ENCODE measurements at regions of chr3 and their contacts with region 1.

Region 1: GRCh38 chr3:169764452-169765274 is at the start of gene TERC:
- DNase-seq: peak; percentile 85
- H3K4me3 Mint-ChIP-seq: peak within 1 kb of the TSS; percentile 96
- H3K27ac Mint-ChIP-seq: peak within 1 kb of the TSS; percentile 98
- H3K4me1 Mint-ChIP-seq: peaks cover 24% of the 10 kb centered on the region
- H3K27me3 Mint-ChIP-seq: peaks cover 5% of the 10 kb centered on the region
- total RNA-seq, gene TERC: 3.1 and 3.4 TPM in 2 replicates

Region 2: GRCh38 chr3:169812332-169813235 is 47.9 kb after region 1 on chr3 and contains the starts of genes LRRC34 and LRRIQ4:
- intact Hi-C with region 1: loop called (anchors 2 kb)
- DNase-seq: peak; percentile 64
- H3K4me3 Mint-ChIP-seq: peak within 1 kb of the TSS; percentile 83
- H3K27ac Mint-ChIP-seq: peak within 1 kb of the TSS; percentile 89
- H3K4me1 Mint-ChIP-seq: peaks cover 49% of the 10 kb centered on the region
- H3K27me3 Mint-ChIP-seq: peaks cover 6% of the 10 kb centered on the region
- total RNA-seq, gene LRRC34: 2.8 and 2.9 TPM in 2 replicates
- total RNA-seq, gene LRRIQ4: 0.10 and 0.12 TPM in 2 replicates

Region 3: DNA sequence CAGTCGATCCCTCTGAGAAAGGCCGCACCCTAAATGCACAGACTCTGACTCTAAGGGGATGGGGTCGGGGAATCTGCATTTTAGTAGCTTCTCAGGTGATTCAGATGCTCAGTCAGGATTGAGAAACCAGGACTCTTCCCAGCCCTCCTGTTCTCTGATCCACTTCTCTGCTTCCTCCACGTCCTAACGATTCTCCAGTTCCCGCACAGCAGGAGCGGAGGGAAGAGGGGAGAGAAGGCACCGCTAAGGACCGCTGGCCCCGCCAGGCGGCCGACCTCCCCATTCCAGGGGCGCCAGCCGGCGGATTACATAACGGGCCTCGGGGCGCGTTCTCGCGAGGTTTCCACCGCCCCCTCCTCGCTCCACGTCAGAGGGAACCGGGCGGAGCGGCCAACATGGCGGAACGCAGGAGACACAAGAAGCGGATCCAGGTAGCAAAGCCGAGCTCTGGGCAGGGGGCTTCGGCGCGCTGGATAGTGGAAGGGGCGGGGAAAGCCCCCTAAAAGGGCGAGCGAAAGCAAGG is 201.8 kb after region 1 on chr3 and contains the start of gene SEC62:
- intact Hi-C with region 1: loop called (anchors 1 kb)
- DNase-seq: peak; percentile 90
- H3K4me3 Mint-ChIP-seq: peak within 1 kb of the TSS; percentile 91
- H3K27ac Mint-ChIP-seq: peak within 1 kb of the TSS; percentile 99
- H3K4me1 Mint-ChIP-seq: peaks cover 42% of the 10 kb centered on the region
- H3K27me3 Mint-ChIP-seq: peaks cover 2% of the 10 kb centered on the region
- total RNA-seq, gene SEC62: 75.4 and 85.7 TPM in 2 replicates

Region 4: GRCh38 chr3:170055209-170055608 is 290.5 kb after region 1 on chr3:
- intact Hi-C with region 1: loop called (anchors 2 kb)
- DNase-seq: no peak
- H3K4me3 Mint-ChIP-seq: no peak overlapping the region
- H3K27ac Mint-ChIP-seq: no peak overlapping the region
- H3K4me1 Mint-ChIP-seq: peaks cover 43% of the 10 kb centered on the region
- H3K27me3 Mint-ChIP-seq: no peaks in the 10 kb centered on the region

Region 5: DNA sequence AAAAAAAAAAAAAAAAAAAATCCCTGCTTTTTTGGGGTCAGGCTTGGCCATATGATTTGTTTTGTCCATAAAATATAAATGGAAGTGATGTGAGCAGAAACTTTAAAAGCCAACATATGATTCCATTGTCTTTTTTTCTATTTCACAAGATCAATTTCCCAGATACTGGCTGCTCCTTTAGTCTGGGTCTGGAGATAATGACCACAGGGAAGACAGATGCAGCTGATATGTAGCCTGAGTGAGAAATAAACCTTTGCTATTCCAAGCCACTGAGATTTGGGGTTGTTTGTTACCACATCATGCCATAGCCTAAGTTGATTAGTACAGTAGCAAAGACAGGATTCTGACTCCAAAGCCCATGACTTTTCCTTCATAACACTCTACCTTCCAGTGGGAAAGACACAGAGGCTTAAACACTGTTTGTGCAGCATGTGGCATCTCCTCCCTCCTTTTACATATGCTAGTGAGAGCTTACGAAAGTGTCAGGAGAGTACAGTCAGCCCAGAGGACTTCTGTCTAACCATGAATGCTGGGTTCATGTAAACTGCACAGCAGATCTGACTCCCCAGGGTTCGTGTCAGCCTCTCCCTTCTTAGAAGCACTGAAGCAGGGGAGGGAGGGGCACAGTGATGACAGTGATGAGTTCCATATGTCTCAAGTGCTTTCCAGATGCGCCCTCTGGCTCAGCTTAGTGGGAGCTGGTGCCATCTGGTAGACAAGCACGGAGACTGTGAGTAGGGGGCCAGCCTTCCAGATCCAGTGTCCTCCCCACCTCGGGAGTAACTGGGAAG is 857.9 kb after region 1 on chr3:
- intact Hi-C with region 1: no loop called
- DNase-seq: no peak
- H3K4me3 Mint-ChIP-seq: no peak overlapping the region
- H3K27ac Mint-ChIP-seq: no peak overlapping the region
- H3K4me1 Mint-ChIP-seq: no peaks in the 10 kb centered on the region
- H3K27me3 Mint-ChIP-seq: peaks cover 3% of the 10 kb centered on the region

Region 6: GRCh38 chr3:170811928-170812591 is 1047.4 kb after region 1 on chr3:
- intact Hi-C with region 1: loop called (anchors 5 kb)
- DNase-seq: peak; percentile 49
- H3K4me3 Mint-ChIP-seq: no peak overlapping the region
- H3K27ac Mint-ChIP-seq: no peak overlapping the region
- H3K4me1 Mint-ChIP-seq: peaks cover 6% of the 10 kb centered on the region
- H3K27me3 Mint-ChIP-seq: peaks cover 10% of the 10 kb centered on the region